H1 (cell line): ENCODE measurements at regions of chr3 and their contacts with region 1.

Region 1: DNA sequence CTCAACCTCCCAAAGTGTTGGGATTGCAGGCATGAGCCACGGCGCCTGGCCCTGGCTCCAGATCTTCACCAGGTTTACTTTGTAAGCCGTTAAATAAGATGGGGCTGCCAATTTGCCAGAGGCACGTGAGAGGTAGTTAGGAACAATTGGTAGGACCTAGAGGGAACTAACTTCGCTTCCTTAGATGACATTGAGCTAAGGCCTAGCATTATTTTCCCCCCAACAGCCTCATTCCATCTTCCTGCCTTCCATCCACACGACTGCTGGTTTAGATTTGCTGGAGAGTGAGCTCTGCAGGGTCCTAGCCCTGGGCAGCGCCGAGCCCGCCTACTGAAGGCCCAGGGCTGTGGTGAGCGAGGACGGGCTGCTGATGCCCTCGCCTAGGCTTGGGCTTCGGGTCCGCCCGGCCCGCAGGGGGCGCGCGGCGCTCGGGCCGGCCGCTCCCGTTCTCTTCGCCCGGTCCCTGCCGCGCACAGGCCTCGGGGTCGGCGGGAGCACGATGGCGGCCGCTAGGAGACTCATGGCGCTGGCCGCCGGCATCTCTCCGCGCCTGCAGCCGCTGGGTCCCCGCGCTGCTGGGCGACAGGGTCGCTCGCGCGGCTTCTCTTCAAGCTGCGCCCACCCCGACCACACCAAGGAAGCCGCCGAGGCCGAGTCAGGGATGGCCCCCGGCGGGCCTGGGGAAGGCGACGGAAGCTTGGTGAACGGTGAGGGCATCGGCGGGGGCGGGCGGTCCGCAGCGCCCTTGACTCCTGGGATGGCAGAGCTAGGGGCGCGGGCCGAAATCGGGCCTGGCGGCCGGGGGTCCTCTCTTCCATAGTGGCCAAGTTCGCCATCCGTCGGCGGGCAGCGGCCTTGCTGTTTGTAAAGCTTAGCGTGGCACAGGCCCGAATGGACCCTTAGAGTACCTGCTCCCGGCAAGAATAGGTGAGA is 21.9 kb downstream of the DHX30 start:
- DNase-seq: peak in 1 of 2 experiments; percentile 86
- H3K4me3 ChIP-seq: peak overlapping the region; percentile 80 to 99 (median 86)
- H3K27ac ChIP-seq: peak overlapping the region; percentile 79
- H3K4me1 ChIP-seq: peaks cover 3 to 6% (median 4%) of the 10 kb centered on the region in 4 experiments; a peak in 5 of 7 replicates
- H3K27me3 ChIP-seq: no peaks in the 10 kb centered on the region
- CTCF ChIP-seq: peak; percentile 76 to 91 (median 90)
- EP300 ChIP-seq: no peak; a peak in 1 of 3 replicates
- POLR2A ChIP-seq: peak; percentile 84 to 93
- RAD21 ChIP-seq: peak; percentile 23 to 53; a peak in 3 of 4 replicates

Region 2: DNA sequence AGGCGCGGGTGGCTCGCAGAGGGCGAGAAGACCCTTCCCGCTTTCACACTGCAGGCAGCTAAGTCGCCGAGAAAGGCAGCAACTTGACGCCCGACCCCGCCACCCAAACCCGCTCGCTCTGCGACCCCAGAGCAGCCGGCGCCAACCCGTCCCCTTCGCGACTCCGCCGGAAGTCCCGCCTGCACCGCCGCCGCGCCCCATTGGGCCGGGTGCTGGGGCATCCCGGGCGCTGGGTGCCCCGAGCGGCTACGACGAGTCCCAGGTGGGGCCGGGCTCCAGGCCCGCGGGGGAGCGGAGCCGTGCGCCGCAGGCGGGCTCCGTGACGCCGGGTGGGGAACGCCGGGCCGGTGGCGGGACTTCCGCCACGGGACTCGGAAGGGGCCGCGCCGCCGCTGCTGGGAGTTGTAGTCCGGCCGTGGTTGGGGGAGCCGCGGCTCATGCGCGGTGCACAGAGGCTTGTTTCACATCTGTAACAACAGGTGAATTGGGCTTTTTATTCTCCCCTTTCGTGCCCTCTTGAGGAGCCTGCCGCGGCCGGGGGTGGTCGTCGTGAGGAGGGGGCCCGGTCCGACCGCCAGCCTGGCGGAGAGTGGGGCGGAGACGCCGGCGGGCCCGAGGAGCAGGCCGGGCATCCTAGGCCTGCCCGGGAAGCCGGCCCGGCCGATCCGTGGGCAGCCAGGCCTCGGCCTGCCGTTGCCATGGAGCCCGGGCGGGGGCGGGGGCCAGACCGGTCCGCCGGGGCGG is 21.9 kb before region 1 on chr3 and contains the start of gene DHX30:
- CTCF ChIA-PET with region 1: interaction called, 13 read pairs
- POLR2A ChIA-PET with region 1: interaction called, 13 read pairs
- DNase-seq: peak in 1 of 2 experiments; percentile 91
- H3K4me3 ChIP-seq: peak within 1 kb of the TSS; percentile 81 to 96 (median 92)
- H3K27ac ChIP-seq: peak within 1 kb of the TSS; percentile 83
- H3K4me1 ChIP-seq: peaks cover 0 to 4% (median 2%) of the 10 kb centered on the region in 4 experiments; a peak in 3 of 7 replicates
- H3K27me3 ChIP-seq: no peaks in the 10 kb centered on the region
- CTCF ChIP-seq: no peak
- EP300 ChIP-seq: no peak
- POLR2A ChIP-seq: peak; percentile 35 to 41
- RAD21 ChIP-seq: no peak
- total RNA-seq, gene DHX30: 97.7 and 97.9 TPM in 2 replicates

Region 3: DNA sequence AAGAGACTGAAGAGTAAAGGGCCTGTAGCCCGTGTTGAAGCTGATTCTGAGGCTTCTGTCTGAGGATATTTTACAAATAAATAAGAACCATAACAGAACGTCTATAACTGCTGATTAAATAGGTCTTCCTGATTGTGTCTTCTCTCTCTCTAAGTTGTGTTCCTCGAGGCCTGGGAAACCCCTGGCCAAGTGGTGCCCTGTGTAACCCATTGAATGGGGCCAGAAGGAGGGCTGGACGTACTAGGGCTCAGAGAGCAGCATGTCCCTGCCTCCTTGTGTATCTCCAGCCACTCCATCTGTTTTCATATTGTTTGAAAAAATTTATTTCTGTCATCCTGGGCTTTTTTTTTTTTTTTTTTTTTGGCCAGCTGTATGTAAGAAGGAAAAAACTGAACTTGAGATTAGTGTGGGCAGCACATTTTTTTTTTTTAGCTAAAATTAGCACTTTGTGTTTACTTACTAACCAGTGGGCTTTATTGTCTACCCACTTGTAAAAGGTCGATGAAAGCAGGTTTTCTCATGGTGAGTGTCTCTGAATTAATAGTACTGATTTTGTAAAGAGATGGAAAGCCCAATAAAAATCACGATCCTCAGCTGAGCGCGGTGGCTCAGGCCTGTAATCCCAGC is 11.1 kb before region 1 on chr3:
- CTCF ChIA-PET with region 1: interaction called, 8 read pairs
- POLR2A ChIA-PET with region 1: interaction called, 25 read pairs
- DNase-seq: no peak
- H3K4me3 ChIP-seq: no peak overlapping the region
- H3K27ac ChIP-seq: no peak overlapping the region
- H3K4me1 ChIP-seq: no peaks in the 10 kb centered on the region
- H3K27me3 ChIP-seq: no peaks in the 10 kb centered on the region
- CTCF ChIP-seq: no peak
- EP300 ChIP-seq: no peak
- POLR2A ChIP-seq: no peak
- RAD21 ChIP-seq: no peak